Posterior vena cava (tissue), 2 donors: ENCODE measurements at regions of chr13 and their contacts with region 1.

Region 1: GRCh38 chr13:69028936-69029335 is 1078.7 kb upstream of the ATXN8OS start:
- DNase-seq: no peak

Region 2: GRCh38 chr13:67355812-67356476 is 1673.0 kb before region 1 on chr13:
- intact Hi-C with region 1: no loop called
- DNase-seq: no peak

Region 3: GRCh38 chr13:69040898-69041297 is 12.0 kb after region 1 on chr13:
- intact Hi-C with region 1: loop called in 1 of 2 experiments (anchors 1 kb)
- DNase-seq: no peak

Region 4: DNA sequence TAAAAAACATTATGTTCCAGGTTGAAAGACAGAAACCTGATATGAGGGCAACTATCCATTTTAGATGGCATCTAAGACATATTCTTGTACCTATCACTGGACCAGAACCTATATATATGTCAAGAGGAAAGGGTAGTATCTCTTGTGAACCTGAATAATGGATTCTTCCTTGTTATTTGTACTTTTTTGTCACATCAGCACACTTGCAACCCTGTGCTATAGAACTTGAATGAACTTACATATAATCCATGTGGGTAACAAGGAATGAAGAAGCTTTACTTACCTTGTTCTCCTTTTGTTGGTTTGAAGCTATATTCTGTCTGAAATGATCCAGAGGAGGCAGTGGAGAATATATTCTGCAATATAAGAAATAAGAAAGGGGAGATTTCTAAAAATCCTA is 595.0 kb after region 1 on chr13:
- intact Hi-C with region 1: no loop called
- DNase-seq: no peak